K562 (cell line): ENCODE measurements at regions of chr7 and their contacts with region 1.

Region 1: DNA sequence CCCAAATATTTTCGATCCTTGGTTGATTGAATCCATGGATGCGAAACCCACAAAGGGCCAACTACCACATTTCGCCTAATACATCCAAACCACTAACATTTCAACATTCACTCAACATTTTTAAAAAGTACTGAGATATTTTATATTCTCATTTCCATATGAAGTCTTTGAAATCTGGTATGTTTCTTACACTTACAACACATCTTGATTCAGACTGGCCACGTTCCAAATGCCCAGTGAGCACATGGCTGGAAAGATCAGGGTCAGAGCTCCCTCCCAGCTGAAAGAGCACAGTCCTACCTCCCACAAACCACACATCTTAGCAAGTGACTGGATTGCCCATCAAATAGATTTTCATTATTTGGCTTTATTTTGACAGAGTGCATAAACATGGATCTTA is 18.9 kb downstream of the NCAPG2 start:
- DNase-seq: no peak
- ATAC-seq: no peak
- H3K4me3 ChIP-seq: no peak overlapping the region
- H3K27ac ChIP-seq: no peak overlapping the region
- H3K4me1 ChIP-seq: no peaks in the 10 kb centered on the region
- H3K27me3 ChIP-seq: no peaks in the 10 kb centered on the region
- CTCF ChIP-seq: no peak
- EP300 ChIP-seq: no peak
- POLR2A ChIP-seq: no peak
- RAD21 ChIP-seq: no peak

Region 2: GRCh38 chr7:158633055-158633956 is 52.4 kb before region 1 on chr7:
- CTCF ChIA-PET with region 1: no interaction called
- POLR2A ChIA-PET with region 1: no interaction called
- in situ Hi-C with region 1: no loop called
- intact Hi-C with region 1: no loop called
- DNase-seq: no peak
- ATAC-seq: peak; percentile 35
- H3K4me3 ChIP-seq: no peak overlapping the region
- H3K27ac ChIP-seq: no peak overlapping the region
- H3K4me1 ChIP-seq: no peaks in the 10 kb centered on the region
- H3K27me3 ChIP-seq: no peaks in the 10 kb centered on the region
- CTCF ChIP-seq: no peak
- EP300 ChIP-seq: no peak
- POLR2A ChIP-seq: no peak
- RAD21 ChIP-seq: no peak

Region 3: DNA sequence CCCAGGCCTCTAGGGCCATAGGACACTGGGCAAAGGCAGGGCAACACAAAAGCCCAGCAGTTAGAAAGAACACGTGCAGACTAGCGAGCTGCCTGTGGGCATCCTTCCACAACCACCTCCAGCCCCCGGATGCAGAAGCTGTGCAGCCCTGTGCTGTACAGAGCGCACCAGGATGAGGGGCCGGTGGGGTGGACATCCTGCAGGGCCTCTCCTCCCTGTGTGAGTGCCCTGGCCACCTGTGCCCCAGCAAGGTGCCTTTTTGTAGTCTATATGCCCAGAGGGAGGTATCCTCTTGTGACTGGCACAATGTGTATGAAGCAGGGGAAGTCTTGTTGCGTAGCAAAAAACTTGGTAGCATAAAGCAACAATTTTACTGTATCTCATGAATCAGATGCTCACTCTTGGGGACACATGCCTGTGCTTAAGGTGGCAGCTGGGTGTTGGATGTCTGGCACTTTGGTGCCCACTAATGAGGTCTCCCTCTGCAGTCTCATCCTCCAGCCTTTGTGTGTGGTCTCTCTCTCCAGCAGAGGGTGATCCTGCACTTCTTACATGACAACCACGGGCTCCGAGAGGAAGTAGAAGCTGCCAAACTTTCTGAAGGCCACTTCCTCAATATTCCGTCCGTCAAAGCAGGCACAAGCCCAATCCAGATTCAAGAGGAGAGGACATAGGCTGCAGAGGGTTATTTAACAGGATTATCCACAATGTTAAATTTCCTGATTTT is 10.2 kb after region 1 on chr7:
- CTCF ChIA-PET with region 1: no interaction called
- POLR2A ChIA-PET with region 1: interaction called, 17 read pairs
- in situ Hi-C with region 1: no loop called
- intact Hi-C with region 1: no loop called
- DNase-seq: peak in 3 of 4 experiments; percentile 23 to 67 (median 54)
- ATAC-seq: peak; percentile 72
- H3K4me3 ChIP-seq: no peak overlapping the region
- H3K27ac ChIP-seq: no peak overlapping the region
- H3K4me1 ChIP-seq: peaks cover under 1 to 3% of the 10 kb centered on the region in 2 experiments; a peak in 1 of 5 replicates
- H3K27me3 ChIP-seq: no peaks in the 10 kb centered on the region
- CTCF ChIP-seq: peak; percentile 65 to 89 (median 78)
- EP300 ChIP-seq: no peak
- POLR2A ChIP-seq: no peak
- RAD21 ChIP-seq: peak; percentile 86 to 97